Posterior vena cava (tissue), 2 donors: ENCODE measurements at regions of chr12 and their contacts with region 1.

Region 1: GRCh38 chr12:123801573-123802178 is 39.6 kb downstream of the DNAH10 start:
- DNase-seq: no peak

Region 2: GRCh38 chr12:123761841-123762714 is 39.6 kb before region 1 on chr12 and contains the start of gene DNAH10:
- intact Hi-C with region 1: no loop called
- DNase-seq: no peak
- total RNA-seq, gene DNAH10: not detected

Region 3: GRCh38 chr12:123790905-123791467 is 10.7 kb before region 1 on chr12:
- intact Hi-C with region 1: loop called in 1 of 2 experiments (anchors 1 kb)
- DNase-seq: no peak